MCF 10A (cell line): ENCODE measurements at regions of chr10 and their contacts with region 1.

Region 1: DNA sequence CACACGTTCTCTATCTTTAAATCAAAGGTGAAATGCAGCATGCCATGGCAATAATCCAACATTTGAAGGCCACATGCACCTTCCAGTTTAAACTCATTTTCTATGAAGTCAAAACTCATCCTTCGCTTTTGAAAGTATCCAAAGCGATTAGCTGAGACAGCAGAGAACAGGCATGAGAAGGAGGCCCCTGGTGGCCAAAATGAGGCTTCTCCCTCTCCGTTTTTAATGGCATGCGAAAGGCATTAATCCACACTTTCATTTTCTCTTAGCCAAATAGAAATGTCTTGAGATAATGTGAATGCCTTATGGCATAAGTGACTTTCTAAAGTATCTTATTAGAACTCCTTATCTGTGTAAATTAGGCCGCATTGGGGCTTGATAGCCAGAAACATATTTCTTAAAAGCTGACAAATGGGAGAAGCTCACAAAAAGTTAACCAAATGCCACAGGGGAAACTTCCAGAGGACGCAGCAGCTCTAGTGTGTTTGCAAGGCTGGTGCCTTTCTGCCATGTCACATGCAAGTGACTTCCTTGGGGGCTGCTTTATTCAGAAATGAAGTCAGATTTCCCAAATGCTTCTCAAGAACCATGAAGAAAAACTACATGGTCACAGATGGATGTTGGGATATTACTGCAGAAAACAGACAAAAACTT is 1189.6 kb downstream of the SORCS1 start:
- DNase-seq: peak; percentile 66
- H3K4me3 Mint-ChIP-seq: peak overlapping the region; percentile 56
- H3K27ac Mint-ChIP-seq: peak overlapping the region; percentile 19
- H3K4me1 Mint-ChIP-seq: no peaks in the 10 kb centered on the region
- H3K27me3 Mint-ChIP-seq: no peaks in the 10 kb centered on the region
- CTCF ChIP-seq: peak; percentile 43

Region 2: GRCh38 chr10:105797234-105797890 is 177.6 kb before region 1 on chr10:
- CTCF ChIA-PET with region 1: interaction called, 6 read pairs
- POLR2A ChIA-PET with region 1: no interaction called
- intact Hi-C with region 1: loop called (anchors 1 kb)
- DNase-seq: peak; percentile 78
- H3K4me3 Mint-ChIP-seq: no peak overlapping the region
- H3K27ac Mint-ChIP-seq: no peak overlapping the region
- H3K4me1 Mint-ChIP-seq: peaks cover 14% of the 10 kb centered on the region
- H3K27me3 Mint-ChIP-seq: no peaks in the 10 kb centered on the region
- CTCF ChIP-seq: peak; percentile 59

Region 3: GRCh38 chr10:106011250-106011649 is 36.3 kb after region 1 on chr10:
- CTCF ChIA-PET with region 1: no interaction called
- POLR2A ChIA-PET with region 1: no interaction called
- intact Hi-C with region 1: no loop called
- DNase-seq: no peak
- H3K4me3 Mint-ChIP-seq: no peak overlapping the region
- H3K27ac Mint-ChIP-seq: no peak overlapping the region
- H3K4me1 Mint-ChIP-seq: no peaks in the 10 kb centered on the region
- H3K27me3 Mint-ChIP-seq: no peaks in the 10 kb centered on the region
- CTCF ChIP-seq: no peak

Region 4: DNA sequence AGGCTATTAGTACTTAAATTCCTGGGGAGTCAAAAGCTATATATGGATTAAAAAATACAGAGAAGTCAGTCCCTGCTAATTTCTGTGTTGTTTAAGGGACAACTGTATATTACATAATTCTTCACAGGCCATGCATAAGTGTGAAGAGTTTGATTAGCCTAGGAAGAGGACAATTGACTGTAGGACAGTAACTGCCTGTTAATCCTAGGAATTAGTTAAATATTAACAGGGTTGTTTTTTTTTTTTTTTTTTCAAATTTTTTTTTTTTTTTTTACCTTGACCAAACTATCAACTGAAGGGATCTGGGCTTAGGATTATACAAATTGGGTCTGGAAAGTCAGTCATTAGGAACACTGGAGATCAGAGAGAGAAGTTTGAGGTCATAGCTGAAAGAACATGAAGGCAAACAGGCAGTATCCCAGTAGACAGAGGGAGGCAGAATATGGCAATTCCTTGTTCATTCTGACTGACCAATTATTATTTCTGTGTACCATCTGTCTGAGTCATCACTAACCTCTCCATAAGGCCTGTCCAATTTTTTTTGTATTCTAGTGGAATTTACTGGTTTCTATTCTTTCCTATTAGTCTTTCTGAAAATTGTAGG is 50.4 kb after region 1 on chr10:
- CTCF ChIA-PET with region 1: no interaction called
- POLR2A ChIA-PET with region 1: no interaction called
- intact Hi-C with region 1: no loop called
- DNase-seq: no peak
- H3K4me3 Mint-ChIP-seq: no peak overlapping the region
- H3K27ac Mint-ChIP-seq: no peak overlapping the region
- H3K4me1 Mint-ChIP-seq: no peaks in the 10 kb centered on the region
- H3K27me3 Mint-ChIP-seq: no peaks in the 10 kb centered on the region
- CTCF ChIP-seq: no peak

Region 5: DNA sequence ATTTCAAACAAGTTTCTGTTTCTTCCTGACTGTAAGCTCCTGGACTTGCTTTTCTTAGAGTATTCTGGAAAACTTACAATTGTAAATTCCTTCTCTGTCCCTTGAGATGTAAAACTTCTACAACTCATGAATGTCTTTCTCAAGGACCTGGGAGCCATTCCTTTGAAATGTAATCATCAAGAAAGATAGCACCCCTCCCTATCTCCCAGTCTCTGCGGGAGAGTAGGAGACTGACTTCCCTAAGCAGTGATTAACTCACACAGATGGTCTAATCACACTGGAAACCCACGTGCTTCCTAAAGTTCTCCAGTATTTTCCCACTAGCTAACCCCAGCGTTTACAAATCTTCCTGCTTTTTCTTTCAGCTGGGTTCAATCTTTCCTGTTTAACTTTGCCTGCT is 640.2 kb after region 1 on chr10:
- CTCF ChIA-PET with region 1: no interaction called
- POLR2A ChIA-PET with region 1: no interaction called
- intact Hi-C with region 1: no loop called
- DNase-seq: no peak
- H3K4me3 Mint-ChIP-seq: no peak overlapping the region
- H3K27ac Mint-ChIP-seq: no peak overlapping the region
- H3K4me1 Mint-ChIP-seq: no peaks in the 10 kb centered on the region
- H3K27me3 Mint-ChIP-seq: no peaks in the 10 kb centered on the region
- CTCF ChIP-seq: no peak